Astrocyte of the cerebellum (primary cell): ENCODE measurements at regions of chr7 and their contacts with region 1.

Region 1: DNA sequence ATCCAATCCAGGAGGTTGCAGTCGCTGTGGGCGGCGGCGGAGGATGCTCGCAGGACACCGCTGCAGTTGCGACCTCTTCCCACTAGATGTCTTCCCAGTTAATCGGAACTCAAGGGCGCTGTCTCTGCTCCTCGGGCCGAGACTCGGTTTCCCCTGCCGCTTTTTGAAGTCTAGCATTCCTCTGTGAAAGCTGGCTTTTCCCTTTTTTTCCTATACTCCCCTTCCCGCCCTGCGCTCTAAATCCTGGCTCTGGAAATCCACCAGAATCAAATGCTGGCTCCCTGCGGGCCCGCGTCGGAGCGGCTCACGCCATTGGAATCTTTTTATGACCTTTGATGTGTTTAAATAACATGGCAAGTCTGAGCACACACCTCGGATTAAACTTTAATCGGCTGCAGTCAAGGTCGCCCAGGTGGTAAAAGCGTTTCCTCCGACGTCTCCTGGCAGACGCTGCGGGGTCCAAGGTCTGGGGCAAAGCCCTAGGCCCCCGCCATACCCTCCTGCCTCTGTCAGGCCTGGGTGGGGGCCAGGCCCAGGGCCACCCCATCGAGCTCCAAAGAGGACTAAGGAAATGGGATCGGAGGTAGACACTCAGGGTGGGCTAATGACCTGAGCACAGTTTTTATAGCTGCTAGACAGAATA is 10.7 kb upstream of the HOXA13 start:
- DNase-seq: peak; percentile 8
- H3K4me3 ChIP-seq: peak overlapping the region; percentile 21
- CTCF ChIP-seq: peak; percentile 83

Region 2: DNA sequence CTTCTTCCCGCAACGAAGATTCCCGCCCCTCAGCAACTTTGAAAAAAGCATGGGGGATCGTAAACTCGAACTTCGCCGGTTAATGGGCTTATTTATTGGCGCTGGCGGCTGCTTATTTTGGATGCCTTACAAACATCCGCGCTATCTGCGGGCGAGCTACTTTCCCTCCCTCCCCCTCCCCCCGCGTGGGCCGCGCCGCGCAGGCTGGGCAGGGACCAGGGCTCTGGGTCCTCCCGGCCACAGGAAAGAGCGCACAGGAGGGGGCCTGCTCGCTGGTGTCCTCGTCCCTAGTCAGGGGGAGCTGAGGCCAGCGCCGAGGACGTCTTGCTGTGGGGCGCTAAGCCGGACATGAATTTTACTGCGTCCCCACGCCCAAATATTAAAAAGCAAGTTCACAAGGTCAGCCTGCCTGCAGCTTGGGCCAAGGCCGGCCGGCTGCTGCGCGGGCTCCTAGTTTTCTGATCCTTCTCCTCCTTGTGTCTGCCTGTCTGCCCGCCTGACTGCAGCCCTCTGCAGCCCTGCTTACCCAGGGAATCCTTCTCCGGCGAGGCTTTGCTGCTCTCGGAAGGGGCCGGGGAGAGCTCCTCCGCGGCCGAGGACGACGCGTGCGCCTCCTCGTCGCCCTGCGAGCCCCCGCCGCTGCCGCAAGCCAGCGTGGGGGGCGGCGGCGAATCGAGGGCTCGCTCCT is 37.6 kb before region 1 on chr7:
- in situ Hi-C with region 1: no loop called
- DNase-seq: no peak
- H3K4me3 ChIP-seq: no peak overlapping the region
- CTCF ChIP-seq: no peak

Region 3: GRCh38 chr7:27576360-27576944 is 365.9 kb after region 1 on chr7:
- in situ Hi-C with region 1: loop called (anchors 25 kb)
- DNase-seq: peak; percentile 23
- H3K4me3 ChIP-seq: no peak overlapping the region
- CTCF ChIP-seq: peak; percentile 24